PC-3 (cell line): ENCODE measurements at regions of chr3 and their contacts with region 1.

Region 1: DNA sequence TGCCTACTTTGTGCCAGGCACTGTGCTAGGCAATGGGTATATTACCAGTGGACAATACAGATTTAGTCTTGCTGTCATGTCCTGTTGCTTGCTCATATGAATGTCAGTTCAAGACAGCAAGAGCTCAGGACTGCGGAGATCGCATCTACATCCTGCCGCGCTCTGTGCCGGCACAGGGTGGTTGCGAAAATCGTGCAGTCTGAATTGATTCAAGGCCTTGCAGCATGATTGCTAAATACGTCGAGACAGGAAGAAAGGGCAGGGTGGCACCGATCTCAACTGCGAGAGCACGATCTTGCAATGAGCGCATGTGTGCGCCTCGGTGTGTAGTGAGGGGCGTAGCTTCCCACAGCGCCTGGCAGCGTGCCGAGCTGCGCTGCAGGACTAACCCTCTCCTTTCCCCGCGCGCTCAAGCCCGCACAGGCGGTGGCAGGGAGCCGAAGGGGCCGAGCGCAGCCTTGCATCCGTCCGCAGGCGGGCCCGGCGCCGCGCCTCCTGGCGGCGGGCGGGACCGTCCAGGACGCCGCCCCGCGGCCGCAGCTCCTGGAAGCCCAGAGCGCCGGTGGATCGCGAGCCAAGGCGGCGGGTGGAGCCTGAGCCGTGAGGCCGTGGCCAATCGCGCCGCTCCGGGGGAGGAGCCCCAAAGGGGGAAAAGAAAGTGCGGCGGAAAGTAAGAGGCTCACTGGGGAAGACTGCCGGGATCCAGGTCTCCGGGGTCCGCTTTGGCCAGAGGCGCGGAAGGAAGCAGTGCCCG is at the start of gene IL1RAP:
- DNase-seq: peak; percentile 96
- ATAC-seq: peak; percentile 91
- H3K4me3 ChIP-seq: peak within 1 kb of the TSS; percentile 95
- H3K27ac ChIP-seq: peak within 1 kb of the TSS; percentile 24
- H3K4me1 ChIP-seq: peaks cover 40% of the 10 kb centered on the region
- H3K27me3 ChIP-seq: no peaks in the 10 kb centered on the region
- CTCF ChIP-seq: peak; percentile 65
- total RNA-seq, gene IL1RAP: 5.0 and 13.4 TPM in 2 replicates

Region 2: DNA sequence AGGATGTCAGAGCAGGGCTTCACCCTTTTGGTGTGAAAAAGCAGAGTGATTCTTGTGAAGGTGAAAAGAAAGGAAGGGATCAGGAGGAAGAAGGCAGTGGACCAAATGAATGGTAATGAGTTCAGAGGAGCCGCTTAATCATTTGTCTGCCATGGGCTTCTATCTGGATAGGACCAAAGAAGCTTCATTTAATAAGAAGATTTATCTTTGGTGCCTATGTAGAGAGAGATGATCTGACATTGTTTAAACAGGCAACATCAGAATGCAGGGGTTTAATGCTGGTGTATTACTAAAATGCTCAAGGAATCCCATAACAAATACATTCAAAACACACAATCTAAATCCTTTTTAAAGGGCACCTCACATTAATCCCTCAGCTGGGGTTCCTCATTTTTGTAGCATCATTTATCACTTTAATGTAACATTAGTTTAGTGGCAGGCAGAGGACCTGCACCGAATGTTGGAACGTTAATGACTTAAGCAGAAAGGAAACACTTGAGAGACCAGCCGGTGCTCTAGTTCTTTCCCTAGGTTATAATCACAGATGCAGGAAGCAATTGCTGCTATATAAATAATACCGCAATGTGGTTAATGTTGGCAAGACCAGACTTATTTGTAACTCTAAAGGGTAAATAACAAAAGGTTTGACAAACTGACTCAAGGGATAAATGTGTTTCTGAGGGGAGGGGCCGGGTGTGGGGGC is 27.6 kb before region 1 on chr3:
- CTCF ChIA-PET with region 1: no interaction called
- POLR2A ChIA-PET with region 1: no interaction called
- intact Hi-C with region 1: loop called (anchors 2 kb)
- DNase-seq: peak; percentile 82
- ATAC-seq: peak; percentile 95
- H3K4me3 ChIP-seq: no peak overlapping the region; the same call in 1 of the 2 replicates
- H3K27ac ChIP-seq: no peak overlapping the region
- H3K4me1 ChIP-seq: peaks cover 16% of the 10 kb centered on the region
- H3K27me3 ChIP-seq: no peaks in the 10 kb centered on the region
- CTCF ChIP-seq: no peak

Region 3: DNA sequence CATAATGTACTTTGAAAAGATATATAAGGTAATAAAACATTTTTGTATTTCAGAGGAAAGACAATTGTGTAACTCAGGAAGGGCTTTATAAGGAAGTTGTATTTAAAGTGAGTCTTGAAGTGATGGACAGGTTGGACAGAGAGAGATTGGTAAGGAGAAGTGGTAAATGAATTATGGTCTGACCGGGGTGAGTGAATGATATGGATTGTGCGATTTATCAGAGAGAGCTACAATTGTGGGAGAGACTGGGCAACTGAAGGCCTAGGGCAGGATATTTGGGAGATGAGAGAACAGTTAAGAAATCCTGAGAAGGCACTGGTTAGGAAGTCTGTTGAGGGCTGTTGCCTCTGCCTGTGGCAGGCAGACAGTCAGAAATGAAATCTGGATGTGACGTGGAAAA is 15.1 kb after region 1 on chr3:
- CTCF ChIA-PET with region 1: no interaction called
- POLR2A ChIA-PET with region 1: no interaction called
- intact Hi-C with region 1: no loop called
- DNase-seq: no peak
- ATAC-seq: no peak
- H3K4me3 ChIP-seq: no peak overlapping the region
- H3K27ac ChIP-seq: no peak overlapping the region
- H3K4me1 ChIP-seq: peaks cover 31% of the 10 kb centered on the region
- H3K27me3 ChIP-seq: no peaks in the 10 kb centered on the region
- CTCF ChIP-seq: no peak